Activated T-helper 1 cell treated with anti-CD3 and anti-CD28 coated beads, Interleukin-12 subunit alpha, Interleukin-12 subunit beta, Interleukin-2, Interleukin-4 antibody, amounts not matched to agents 30 ng/mL and 10 ng/mL and 1 ng/mL, durations not matched to agents 14 hours and 24 hours and 36 hours (primary cell): ENCODE measurements at regions of chr12 and their contacts with region 1.

Region 1: GRCh38 chr12:126784328-126784921 is 1482.5 kb upstream of the TMEM132C start:
- DNase-seq: no peak
- H3K4me3 Mint-ChIP-seq: no peak overlapping the region
- H3K27ac Mint-ChIP-seq: no peak overlapping the region
- H3K4me1 Mint-ChIP-seq: no peaks in the 10 kb centered on the region
- H3K27me3 Mint-ChIP-seq: peaks cover 4% of the 10 kb centered on the region

Region 2: GRCh38 chr12:126741536-126742240 is 42.7 kb before region 1 on chr12:
- intact Hi-C with region 1: no loop called
- DNase-seq: no peak
- H3K4me3 Mint-ChIP-seq: no peak overlapping the region
- H3K27ac Mint-ChIP-seq: no peak overlapping the region
- H3K4me1 Mint-ChIP-seq: no peaks in the 10 kb centered on the region
- H3K27me3 Mint-ChIP-seq: no peaks in the 10 kb centered on the region

Region 3: GRCh38 chr12:126874427-126875026 is 90.1 kb after region 1 on chr12:
- intact Hi-C with region 1: loop called (anchors 2 kb)
- DNase-seq: peak; percentile 22
- H3K4me3 Mint-ChIP-seq: no peak overlapping the region
- H3K27ac Mint-ChIP-seq: no peak overlapping the region
- H3K4me1 Mint-ChIP-seq: no peaks in the 10 kb centered on the region
- H3K27me3 Mint-ChIP-seq: no peaks in the 10 kb centered on the region

Region 4: DNA sequence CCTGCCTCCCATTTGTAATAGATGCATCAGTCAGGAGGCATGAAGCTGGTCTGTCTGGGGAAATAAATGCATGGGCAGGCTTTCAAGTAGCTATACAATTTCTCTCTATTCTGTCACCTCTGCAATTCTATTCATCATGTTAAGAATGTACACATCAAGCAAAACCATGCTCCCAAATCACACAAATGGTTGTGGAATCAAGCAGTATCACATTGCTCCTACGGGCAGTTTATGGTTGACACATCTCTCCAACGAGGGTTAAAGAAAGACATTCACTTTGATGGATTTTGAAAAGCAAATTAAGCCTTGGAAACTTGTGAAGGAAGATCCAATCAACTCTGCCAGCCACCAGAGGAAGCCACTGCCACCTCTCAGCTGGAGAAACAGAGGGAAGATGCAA is 205.1 kb after region 1 on chr12:
- intact Hi-C with region 1: no loop called
- DNase-seq: no peak
- H3K4me3 Mint-ChIP-seq: no peak overlapping the region
- H3K27ac Mint-ChIP-seq: no peak overlapping the region
- H3K4me1 Mint-ChIP-seq: no peaks in the 10 kb centered on the region
- H3K27me3 Mint-ChIP-seq: no peaks in the 10 kb centered on the region